ENCODE measurements at regions of chr5 and their contacts with region 1.

Region 1: GRCh38 chr5:157219491-157220271 is 39.0 kb downstream of the ITK start:
- DNase-seq: peak; percentile 36
- H3K4me3 Mint-ChIP-seq: peak overlapping the region; percentile 19
- H3K27ac Mint-ChIP-seq: peak overlapping the region; percentile 90
- H3K4me1 Mint-ChIP-seq: peaks cover 93% of the 10 kb centered on the region
- H3K27me3 Mint-ChIP-seq: no peaks in the 10 kb centered on the region

Region 2: DNA sequence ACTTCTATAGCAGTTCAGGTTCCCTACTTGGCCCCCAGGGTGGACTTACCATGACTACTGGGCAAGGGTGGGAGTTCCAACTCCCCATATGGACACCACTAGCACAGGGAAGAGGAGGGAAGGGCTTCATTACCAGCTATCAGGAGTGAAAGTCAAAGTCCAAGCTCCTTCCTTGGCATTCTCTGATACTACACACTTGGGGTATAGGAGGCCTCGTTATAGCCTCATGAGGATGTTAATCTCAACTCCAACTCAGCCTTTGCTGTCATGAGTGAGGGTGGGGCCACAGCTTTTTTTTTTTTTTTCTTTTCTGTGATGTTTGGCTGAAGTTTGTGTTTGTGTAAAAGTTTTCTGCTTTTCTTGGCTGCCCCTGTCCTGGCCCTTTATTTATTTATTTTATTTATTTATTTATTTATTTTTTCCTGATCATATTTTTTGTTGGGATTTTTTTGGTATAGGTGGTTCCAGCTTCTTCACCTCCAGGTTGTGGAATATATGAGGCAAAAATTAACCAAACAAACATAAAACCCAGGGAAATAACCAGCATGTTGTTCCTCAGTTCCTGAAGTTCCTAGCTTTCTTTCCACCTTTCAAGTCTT is 62.3 kb before region 1 on chr5:
- CTCF ChIA-PET with region 1: interaction called, 5 read pairs
- POLR2A ChIA-PET with region 1: interaction called, 14 read pairs
- DNase-seq: no peak
- H3K4me3 Mint-ChIP-seq: peak overlapping the region; percentile 0
- H3K27ac Mint-ChIP-seq: peak overlapping the region; percentile 50
- H3K4me1 Mint-ChIP-seq: peaks cover 75% of the 10 kb centered on the region
- H3K27me3 Mint-ChIP-seq: no peaks in the 10 kb centered on the region

Region 3: GRCh38 chr5:157189223-157189622 is 30.5 kb before region 1 on chr5:
- CTCF ChIA-PET with region 1: interaction called, 9 read pairs
- POLR2A ChIA-PET with region 1: interaction called, 301 read pairs
- DNase-seq: no peak
- H3K4me3 Mint-ChIP-seq: peak overlapping the region; percentile 70
- H3K27ac Mint-ChIP-seq: peak overlapping the region; percentile 85
- H3K4me1 Mint-ChIP-seq: peaks cover 83% of the 10 kb centered on the region
- H3K27me3 Mint-ChIP-seq: no peaks in the 10 kb centered on the region

Region 4: DNA sequence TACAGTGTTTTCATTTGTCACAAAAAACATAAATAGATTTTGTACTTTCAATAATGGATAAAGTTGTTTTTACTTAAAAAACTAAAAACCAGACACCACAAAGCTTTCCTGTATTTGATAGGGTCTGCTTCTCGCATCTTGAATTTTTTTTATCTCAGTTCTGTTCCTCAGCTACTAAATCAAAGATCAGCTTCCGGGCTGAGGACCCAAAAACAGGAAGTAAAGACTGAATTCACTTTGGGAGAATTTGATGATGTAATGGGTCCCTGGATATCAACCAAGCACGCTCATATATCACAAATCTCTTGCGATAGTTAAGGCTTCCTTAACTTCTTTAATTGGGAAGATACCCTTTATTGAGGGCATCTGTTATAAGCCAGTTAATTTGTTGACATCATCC is 14.9 kb before region 1 on chr5:
- CTCF ChIA-PET with region 1: interaction called, 8 read pairs
- POLR2A ChIA-PET with region 1: interaction called, 99 read pairs
- DNase-seq: no peak
- H3K4me3 Mint-ChIP-seq: no peak overlapping the region
- H3K27ac Mint-ChIP-seq: peak overlapping the region; percentile 68
- H3K4me1 Mint-ChIP-seq: peaks cover 87% of the 10 kb centered on the region
- H3K27me3 Mint-ChIP-seq: no peaks in the 10 kb centered on the region

Region 5: GRCh38 chr5:157265714-157266285 is 46.1 kb after region 1 on chr5 and contains the start of gene CYFIP2:
- CTCF ChIA-PET with region 1: no interaction called
- POLR2A ChIA-PET with region 1: interaction called, 30 read pairs
- DNase-seq: peak; percentile 91
- H3K4me3 Mint-ChIP-seq: peak within 1 kb of the TSS; percentile 98
- H3K27ac Mint-ChIP-seq: peak within 1 kb of the TSS; percentile 97
- H3K4me1 Mint-ChIP-seq: peaks cover 66% of the 10 kb centered on the region
- H3K27me3 Mint-ChIP-seq: no peaks in the 10 kb centered on the region
- total RNA-seq, gene CYFIP2: 337 to 354 TPM

Region 6: DNA sequence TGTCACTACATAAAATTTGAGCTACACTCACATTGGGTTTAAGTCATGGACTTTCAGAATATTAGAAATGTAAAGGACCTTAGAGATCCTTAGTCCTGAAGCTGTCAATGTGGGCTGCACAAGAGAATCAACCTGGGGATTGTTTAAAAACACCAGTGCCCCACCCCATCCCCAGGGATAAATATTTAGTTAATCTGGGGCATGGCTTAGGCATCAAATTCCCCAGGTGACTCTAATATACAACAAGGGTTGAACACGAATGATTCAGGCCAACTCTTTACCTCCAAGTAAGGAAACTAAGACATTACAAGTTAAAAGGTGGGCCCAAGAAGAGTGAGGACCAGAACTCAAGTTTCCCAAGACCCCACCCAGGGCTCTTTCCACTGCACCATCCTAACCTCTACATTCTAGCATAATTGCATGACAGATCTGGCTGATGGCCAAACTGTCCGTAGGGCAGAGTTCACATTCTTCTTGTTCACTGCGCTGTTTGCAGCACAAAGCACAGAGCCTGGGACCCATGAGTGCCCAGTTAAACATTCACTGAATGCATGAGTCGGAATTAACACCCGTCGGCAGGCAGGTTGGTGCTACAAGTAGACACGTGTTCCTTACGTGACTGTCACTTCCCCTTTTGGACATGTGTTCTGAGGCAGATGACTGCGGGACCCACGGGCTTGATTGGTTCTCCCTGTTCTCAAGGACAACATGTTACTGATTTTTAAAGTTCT is 71.5 kb after region 1 on chr5:
- CTCF ChIA-PET with region 1: no interaction called
- POLR2A ChIA-PET with region 1: no interaction called
- DNase-seq: no peak
- H3K4me3 Mint-ChIP-seq: no peak overlapping the region
- H3K27ac Mint-ChIP-seq: no peak overlapping the region
- H3K4me1 Mint-ChIP-seq: peaks cover 50% of the 10 kb centered on the region
- H3K27me3 Mint-ChIP-seq: no peaks in the 10 kb centered on the region